SK-MEL-5 (cell line): ENCODE measurements at regions of chr22 and their contacts with region 1.

Region 1: DNA sequence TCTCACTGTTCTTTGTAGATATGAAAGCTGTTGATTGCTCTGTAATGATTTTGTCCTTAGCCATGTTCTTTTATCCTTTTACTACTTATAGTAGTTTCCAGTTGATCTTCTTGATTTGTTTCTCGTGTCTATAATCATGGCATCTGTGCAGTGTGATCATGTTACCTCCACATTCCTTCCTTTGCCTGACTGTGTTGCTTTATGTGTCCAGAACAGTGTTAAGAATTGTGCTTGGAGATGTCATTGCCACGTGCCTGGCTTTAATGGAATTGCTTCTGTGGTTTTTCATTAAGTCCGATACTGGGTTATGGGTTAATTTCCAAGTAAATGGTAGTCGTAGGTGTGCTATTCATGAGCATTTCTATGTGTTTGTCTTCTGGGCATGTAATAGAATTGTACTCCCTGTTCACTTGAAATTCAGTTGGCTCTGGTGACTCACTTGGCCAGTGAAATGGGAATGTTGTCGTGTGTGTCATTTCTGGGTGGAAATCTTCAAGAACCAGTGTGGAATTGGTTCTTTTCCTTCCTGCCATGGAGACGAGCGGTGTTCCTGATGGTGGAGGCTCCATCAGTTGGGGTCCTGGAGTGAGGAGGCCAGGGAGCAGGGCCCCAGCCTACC is 6.8 kb downstream of the GTSE1 start:
- DNase-seq: peak; percentile 22

Region 2: DNA sequence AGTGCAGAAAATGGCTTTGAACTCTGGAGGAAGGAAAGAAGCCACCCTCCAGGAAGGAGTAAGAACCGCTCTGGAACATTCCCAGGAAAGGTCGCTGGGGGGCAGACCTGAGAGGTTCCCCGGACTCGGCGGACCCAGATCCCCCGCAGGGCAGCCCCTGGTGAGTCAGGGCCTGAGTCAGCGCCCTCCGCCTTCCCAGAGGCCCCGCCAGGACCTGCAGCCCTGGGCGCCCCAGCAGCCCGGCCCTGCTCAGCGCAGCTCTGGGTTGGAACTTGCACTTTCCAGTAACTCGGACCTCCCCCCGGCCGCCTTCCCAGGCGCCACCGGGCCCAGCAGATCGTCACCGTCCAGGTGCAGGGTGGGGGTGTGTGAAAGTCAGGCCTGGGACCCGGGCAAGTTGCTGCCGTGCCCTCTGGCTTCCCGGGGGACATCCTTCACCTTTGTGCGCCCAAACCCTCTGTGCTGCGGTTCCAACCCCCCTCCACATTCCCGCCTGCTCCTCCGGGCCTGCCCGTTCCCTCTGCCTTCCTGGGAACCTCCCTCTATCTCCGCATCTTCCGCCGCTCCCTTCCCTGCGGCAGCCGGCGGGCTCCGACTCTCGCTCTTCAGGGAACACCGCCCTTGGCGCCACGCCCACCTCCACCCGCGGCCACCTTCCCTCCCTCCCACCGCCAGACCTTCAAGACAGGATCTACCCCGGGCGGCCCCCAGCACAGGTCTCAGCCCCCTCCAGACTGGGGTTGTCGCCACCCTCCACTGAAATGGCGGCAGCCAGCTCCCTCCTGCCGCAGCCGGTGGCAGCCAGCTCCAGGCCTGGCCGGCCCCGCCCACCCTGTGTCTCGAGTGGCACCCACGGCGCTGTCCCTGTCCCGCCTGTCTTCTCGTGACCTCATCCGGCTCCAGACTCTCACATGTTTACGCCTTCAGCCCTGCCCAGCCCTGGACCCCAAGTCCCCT is 289.7 kb before region 1 on chr22:
- in situ Hi-C with region 1: loop called (anchors 25 kb)
- DNase-seq: peak; percentile 93